CD4-positive, alpha-beta T cell (primary cell): ENCODE measurements at regions of chr12 and their contacts with region 1.

Region 1: GRCh38 chr12:1605129-1606020 is 11.0 kb upstream of the FBXL14 start:
- DNase-seq: peak; percentile 37 to 87 (median 50)
- ATAC-seq: peak; percentile 69
- H3K4me3 ChIP-seq: peak overlapping the region; percentile 51
- H3K4me3 Mint-ChIP-seq: peak overlapping the region; percentile 79
- H3K27ac ChIP-seq: no peak overlapping the region
- H3K27ac Mint-ChIP-seq: peak overlapping the region; percentile 10
- H3K4me1 ChIP-seq: peaks cover 26% of the 10 kb centered on the region
- H3K4me1 Mint-ChIP-seq: peaks cover 39% of the 10 kb centered on the region
- H3K27me3 ChIP-seq: no peaks in the 10 kb centered on the region
- H3K27me3 Mint-ChIP-seq: no peaks in the 10 kb centered on the region
- CTCF ChIP-seq: peak; percentile 77

Region 2: GRCh38 chr12:569803-570434 is 1035.5 kb before region 1 on chr12:
- CTCF ChIA-PET with region 1: interaction called, 4 read pairs
- POLR2A ChIA-PET with region 1: no interaction called
- intact Hi-C with region 1: loop called (anchors 5 to 10 kb)
- DNase-seq: peak; percentile 78 to 93 (median 84)
- ATAC-seq: peak; percentile 98
- H3K4me3 ChIP-seq: peak overlapping the region; percentile 69
- H3K4me3 Mint-ChIP-seq: peak overlapping the region; percentile 87
- H3K27ac ChIP-seq: no peak overlapping the region
- H3K27ac Mint-ChIP-seq: peak overlapping the region; percentile 78
- H3K4me1 ChIP-seq: peaks cover 53% of the 10 kb centered on the region
- H3K4me1 Mint-ChIP-seq: peaks cover 60% of the 10 kb centered on the region
- H3K27me3 ChIP-seq: no peaks in the 10 kb centered on the region
- H3K27me3 Mint-ChIP-seq: no peaks in the 10 kb centered on the region
- CTCF ChIP-seq: peak; percentile 92

Region 3: DNA sequence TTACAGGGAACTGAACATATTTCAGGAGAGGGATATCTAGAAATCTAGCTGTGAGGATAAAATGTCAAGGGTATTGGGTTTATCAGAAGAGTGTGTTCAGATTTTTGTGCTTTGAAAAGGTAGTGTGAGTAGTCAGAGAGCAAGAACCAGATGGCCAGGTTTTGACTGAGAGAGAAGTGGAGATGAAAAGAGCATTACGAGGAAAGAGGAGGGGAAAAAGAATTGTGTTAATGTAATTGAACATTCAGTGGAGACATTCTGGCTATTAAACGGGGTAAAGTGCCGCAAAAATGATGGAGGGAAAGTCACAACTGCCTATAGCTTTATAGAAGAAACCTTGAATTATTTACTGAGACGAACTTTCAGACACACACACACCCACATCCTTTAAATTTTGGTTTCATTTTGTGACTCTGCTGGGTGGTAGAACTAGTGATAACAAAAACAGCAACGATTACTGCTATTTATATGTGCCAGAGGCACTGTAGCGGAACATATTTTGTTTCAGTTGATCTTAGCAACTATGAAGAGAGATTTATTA is 400.7 kb before region 1 on chr12:
- CTCF ChIA-PET with region 1: no interaction called
- POLR2A ChIA-PET with region 1: interaction called, 3 read pairs
- intact Hi-C with region 1: loop called in 1 of 2 experiments (anchors 10 kb)
- DNase-seq: peak in 4 of 14 experiments; percentile 6 to 66 (median 44)
- ATAC-seq: peak; percentile 92
- H3K4me3 ChIP-seq: peak overlapping the region; percentile 62
- H3K4me3 Mint-ChIP-seq: no peak overlapping the region
- H3K27ac ChIP-seq: peak overlapping the region; percentile 70 to 84
- H3K27ac Mint-ChIP-seq: no peak overlapping the region
- H3K4me1 ChIP-seq: no peaks in the 10 kb centered on the region
- H3K4me1 Mint-ChIP-seq: peaks cover 21% of the 10 kb centered on the region
- H3K27me3 ChIP-seq: no peaks in the 10 kb centered on the region
- H3K27me3 Mint-ChIP-seq: no peaks in the 10 kb centered on the region
- CTCF ChIP-seq: no peak

Region 4: GRCh38 chr12:1583421-1584078 is 21.8 kb before region 1 on chr12:
- CTCF ChIA-PET with region 1: interaction called, 22 read pairs
- POLR2A ChIA-PET with region 1: interaction called, 24 read pairs
- intact Hi-C with region 1: loop called in 1 of 2 experiments (anchors 2 kb)
- DNase-seq: peak in 13 of 14 experiments; percentile 37 to 88 (median 53)
- ATAC-seq: peak; percentile 74
- H3K4me3 ChIP-seq: no peak overlapping the region
- H3K4me3 Mint-ChIP-seq: peak overlapping the region; percentile 2
- H3K27ac ChIP-seq: no peak overlapping the region
- H3K27ac Mint-ChIP-seq: peak overlapping the region; percentile 16
- H3K4me1 ChIP-seq: peaks cover 5% of the 10 kb centered on the region
- H3K4me1 Mint-ChIP-seq: peaks cover 26% of the 10 kb centered on the region
- H3K27me3 ChIP-seq: no peaks in the 10 kb centered on the region
- H3K27me3 Mint-ChIP-seq: no peaks in the 10 kb centered on the region
- CTCF ChIP-seq: peak; percentile 96